ENCODE measurements at regions of chr3 and their contacts with region 1.

Region 1: GRCh38 chr3:87082796-87083440 is 92.0 kb upstream of the VGLL3 start:
- DNase-seq: peak; percentile 34
- ATAC-seq: peak; percentile 90
- H3K4me3 ChIP-seq: no peak overlapping the region
- H3K27ac ChIP-seq: no peak overlapping the region
- H3K4me1 ChIP-seq: no peaks in the 10 kb centered on the region
- H3K27me3 ChIP-seq: no peaks in the 10 kb centered on the region
- CTCF ChIP-seq: peak; percentile 70
- EP300 ChIP-seq: no peak
- POLR2A ChIP-seq: no peak
- RAD21 ChIP-seq: 0 out of 2 replicates have a peak, but pooled peaks have one; percentile 12

Region 2: GRCh38 chr3:86774082-86774691 is 308.7 kb before region 1 on chr3:
- CTCF ChIA-PET with region 1: interaction called, 12 read pairs
- POLR2A ChIA-PET with region 1: no interaction called
- in situ Hi-C with region 1: loop called (anchors 5 kb)
- intact Hi-C with region 1: loop called (anchors 1 kb)
- DNase-seq: peak; percentile 9
- ATAC-seq: no peak
- H3K4me3 ChIP-seq: no peak overlapping the region
- H3K27ac ChIP-seq: no peak overlapping the region
- H3K4me1 ChIP-seq: no peaks in the 10 kb centered on the region
- H3K27me3 ChIP-seq: no peaks in the 10 kb centered on the region
- CTCF ChIP-seq: peak; percentile 41
- EP300 ChIP-seq: no peak
- POLR2A ChIP-seq: no peak
- RAD21 ChIP-seq: no peak

Region 3: GRCh38 chr3:87006844-87007439 is 76.0 kb before region 1 on chr3:
- CTCF ChIA-PET with region 1: interaction called, 4 read pairs
- POLR2A ChIA-PET with region 1: no interaction called
- in situ Hi-C with region 1: no loop called
- intact Hi-C with region 1: loop called (anchors 1 kb)
- DNase-seq: no peak
- ATAC-seq: no peak
- H3K4me3 ChIP-seq: no peak overlapping the region
- H3K27ac ChIP-seq: no peak overlapping the region
- H3K4me1 ChIP-seq: no peaks in the 10 kb centered on the region
- H3K27me3 ChIP-seq: no peaks in the 10 kb centered on the region
- CTCF ChIP-seq: 0 out of 2 replicates have a peak, but pooled peaks have one; percentile 14
- EP300 ChIP-seq: no peak
- POLR2A ChIP-seq: no peak
- RAD21 ChIP-seq: no peak

Region 4: DNA sequence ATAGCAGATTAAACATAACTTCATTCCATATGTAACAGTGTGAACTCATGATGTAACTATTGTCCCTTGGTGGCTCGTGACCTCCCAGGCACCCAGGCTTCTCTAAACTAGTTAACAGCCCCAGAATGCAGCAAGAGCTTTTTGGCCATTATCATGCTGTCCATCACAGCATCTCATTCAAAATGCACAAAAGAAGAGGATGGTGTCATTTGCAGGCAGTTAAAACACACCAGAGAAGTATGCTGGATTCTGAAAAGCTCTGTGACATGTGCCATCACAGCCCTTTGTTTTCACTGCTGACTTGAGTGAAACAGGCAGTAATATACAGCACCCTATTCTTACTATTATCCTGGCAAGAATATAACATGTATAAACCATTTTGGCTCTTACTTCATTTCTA is 26.5 kb after region 1 on chr3:
- CTCF ChIA-PET with region 1: no interaction called
- POLR2A ChIA-PET with region 1: no interaction called
- in situ Hi-C with region 1: no loop called
- intact Hi-C with region 1: no loop called
- DNase-seq: no peak
- ATAC-seq: no peak
- H3K4me3 ChIP-seq: no peak overlapping the region
- H3K27ac ChIP-seq: no peak overlapping the region
- H3K4me1 ChIP-seq: no peaks in the 10 kb centered on the region
- H3K27me3 ChIP-seq: no peaks in the 10 kb centered on the region
- CTCF ChIP-seq: no peak
- EP300 ChIP-seq: no peak
- POLR2A ChIP-seq: no peak
- RAD21 ChIP-seq: no peak

Measured in HepG2 (cell line).